Naive thymus-derived CD4-positive, alpha-beta T cell (primary cell): ENCODE measurements at regions of chr15 and their contacts with region 1.

Region 1: GRCh38 chr15:28123408-28124023 is 24.4 kb upstream of the OCA2 start:
- DNase-seq: peak in 1 of 9 donors; percentile 33
- ATAC-seq: peak; percentile 62
- H3K4me3 ChIP-seq: no peak overlapping the region
- H3K4me3 Mint-ChIP-seq: no peak overlapping the region
- H3K27ac ChIP-seq: no peak overlapping the region
- H3K27ac Mint-ChIP-seq: peak overlapping the region in 1 of 9 donors; percentile 15
- H3K4me1 ChIP-seq: no peaks in the 10 kb centered on the region
- H3K4me1 Mint-ChIP-seq: peaks cover 0 to 23% (median 12%) of the 10 kb centered on the region in 7 donors
- H3K27me3 ChIP-seq: no peaks in the 10 kb centered on the region
- H3K27me3 Mint-ChIP-seq: no peaks in the 10 kb centered on the region

Region 2: GRCh38 chr15:26889298-26889898 is 1234.1 kb before region 1 on chr15:
- CTCF ChIA-PET with region 1: no interaction called
- POLR2A ChIA-PET with region 1: no interaction called
- intact Hi-C with region 1: loop called in 1 of 2 experiments (anchors 10 kb)
- DNase-seq: peak in 5 of 9 donors; percentile 15 to 32 (median 17)
- ATAC-seq: no peak
- H3K4me3 ChIP-seq: no peak overlapping the region
- H3K4me3 Mint-ChIP-seq: no peak overlapping the region
- H3K27ac ChIP-seq: no peak overlapping the region
- H3K27ac Mint-ChIP-seq: no peak overlapping the region
- H3K4me1 ChIP-seq: no peaks in the 10 kb centered on the region
- H3K4me1 Mint-ChIP-seq: peaks cover 0 to 8% (median 3%) of the 10 kb centered on the region in 7 donors
- H3K27me3 ChIP-seq: no peaks in the 10 kb centered on the region
- H3K27me3 Mint-ChIP-seq: peaks cover 0 to 28% (median 17%) of the 10 kb centered on the region in 5 donors

Region 3: GRCh38 chr15:28086175-28086703 is 37.3 kb before region 1 on chr15:
- CTCF ChIA-PET with region 1: no interaction called
- POLR2A ChIA-PET with region 1: no interaction called
- intact Hi-C with region 1: loop called in 1 of 2 experiments (anchors 1 kb)
- DNase-seq: peak in 6 of 9 donors; percentile 27 to 58 (median 40)
- ATAC-seq: peak; percentile 97
- H3K4me3 ChIP-seq: no peak overlapping the region
- H3K4me3 Mint-ChIP-seq: peak overlapping the region in 1 of 10 donors; percentile 6
- H3K27ac ChIP-seq: no peak overlapping the region
- H3K27ac Mint-ChIP-seq: peak overlapping the region in 1 of 9 donors; percentile 33
- H3K4me1 ChIP-seq: no peaks in the 10 kb centered on the region
- H3K4me1 Mint-ChIP-seq: peaks cover 0 to 14% (median 0%) of the 10 kb centered on the region in 7 donors
- H3K27me3 ChIP-seq: no peaks in the 10 kb centered on the region
- H3K27me3 Mint-ChIP-seq: peaks cover 32 to 55% (median 47%) of the 10 kb centered on the region in 5 donors

Region 4: GRCh38 chr15:28726102-28726501 is 602.6 kb after region 1 on chr15:
- CTCF ChIA-PET with region 1: no interaction called
- POLR2A ChIA-PET with region 1: no interaction called
- intact Hi-C with region 1: loop called in 1 of 2 experiments (anchors 10 kb)
- DNase-seq: no peak
- ATAC-seq: no peak
- H3K4me3 ChIP-seq: no peak overlapping the region
- H3K4me3 Mint-ChIP-seq: no peak overlapping the region
- H3K27ac ChIP-seq: no peak overlapping the region
- H3K27ac Mint-ChIP-seq: no peak overlapping the region
- H3K4me1 ChIP-seq: no peaks in the 10 kb centered on the region
- H3K4me1 Mint-ChIP-seq: peaks cover 0 to 9% (median 5%) of the 10 kb centered on the region in 7 donors
- H3K27me3 ChIP-seq: no peaks in the 10 kb centered on the region
- H3K27me3 Mint-ChIP-seq: peaks cover 0 to 30% (median 0%) of the 10 kb centered on the region in 5 donors